GM12878 (cell line): ENCODE measurements at regions of chr3 and their contacts with region 1.

Region 1: DNA sequence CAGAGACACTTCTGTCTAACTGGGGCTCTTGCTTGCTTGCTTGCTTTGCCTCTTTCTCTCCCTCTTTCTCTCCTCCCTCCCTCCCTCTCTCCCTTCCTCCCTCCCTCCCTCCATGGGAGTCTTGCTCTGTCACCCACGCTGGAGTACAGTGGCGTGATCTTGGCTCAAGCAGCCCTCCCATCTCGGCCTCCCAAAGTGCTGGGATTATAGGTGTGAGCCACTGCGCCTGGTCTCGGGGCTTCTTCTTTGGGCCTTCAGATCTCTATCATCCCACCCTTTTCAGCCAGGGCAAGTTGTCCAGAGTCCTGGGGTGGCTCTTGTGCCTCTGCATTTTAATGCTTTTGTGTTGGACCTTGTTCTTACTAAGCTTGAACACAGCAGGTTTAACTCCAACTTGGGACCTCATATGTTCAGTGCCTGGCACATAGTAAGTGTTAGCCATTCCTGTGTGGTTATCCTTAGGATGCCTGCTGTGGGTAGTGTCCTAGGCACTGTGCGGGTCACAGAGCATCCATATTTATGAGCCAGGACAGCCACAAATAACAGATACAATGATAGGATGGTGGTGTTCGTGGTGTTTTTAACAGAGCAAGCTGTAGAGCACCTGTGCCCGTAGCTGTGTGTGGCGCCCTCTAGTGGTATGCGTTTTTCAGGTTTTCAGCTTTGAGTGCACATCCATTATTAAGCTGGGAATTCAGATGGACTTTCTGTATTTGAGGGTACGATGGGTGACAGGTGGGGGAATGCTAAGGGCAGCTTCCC is 75.1 kb downstream of the CCK start:
- DNase-seq: no peak
- ATAC-seq: peak; percentile 47
- H3K4me3 ChIP-seq: no peak overlapping the region
- H3K27ac ChIP-seq: peak overlapping the region; percentile 81; the same call in 1 of the 2 replicates
- H3K4me1 ChIP-seq: peaks cover 50% of the 10 kb centered on the region
- H3K27me3 ChIP-seq: no peaks in the 10 kb centered on the region
- CTCF ChIP-seq: peak; percentile 75 to 91 (median 79)
- EP300 ChIP-seq: no peak
- POLR2A ChIP-seq: peak; percentile 21; the same call in 1 of the 2 replicates
- RAD21 ChIP-seq: peak; percentile 79

Region 2: GRCh38 chr3:41961750-41962679 is 228.9 kb before region 1 on chr3 and contains the start of gene ULK4:
- CTCF ChIA-PET with region 1: no interaction called
- POLR2A ChIA-PET with region 1: no interaction called
- RAD21 ChIA-PET with region 1: interaction called, 3 read pairs
- SMC1A ChIA-PET with region 1: interaction called, 3 read pairs
- in situ Hi-C with region 1: no loop called
- intact Hi-C with region 1: loop called (anchors 10 kb)
- DNase-seq: peak; percentile 97
- ATAC-seq: peak; percentile 96
- H3K4me3 ChIP-seq: peak within 1 kb of the TSS; percentile 86
- H3K27ac ChIP-seq: peak within 1 kb of the TSS; percentile 61
- H3K4me1 ChIP-seq: no peaks in the 10 kb centered on the region
- H3K27me3 ChIP-seq: no peaks in the 10 kb centered on the region
- CTCF ChIP-seq: no peak
- EP300 ChIP-seq: no peak
- POLR2A ChIP-seq: peak; percentile 50; the same call in 1 of the 2 replicates
- RAD21 ChIP-seq: no peak
- polyA plus RNA-seq, gene ULK4: 4.5 to 6.4 TPM

Region 3: GRCh38 chr3:42101048-42101447 is 89.8 kb before region 1 on chr3:
- CTCF ChIA-PET with region 1: interaction called, 36 read pairs
- POLR2A ChIA-PET with region 1: no interaction called
- RAD21 ChIA-PET with region 1: interaction called, 6 read pairs
- SMC1A ChIA-PET with region 1: interaction called, 11 read pairs
- in situ Hi-C with region 1: no loop called
- intact Hi-C with region 1: no loop called
- DNase-seq: no peak
- ATAC-seq: no peak
- H3K4me3 ChIP-seq: no peak overlapping the region
- H3K27ac ChIP-seq: no peak overlapping the region
- H3K4me1 ChIP-seq: peaks cover 8% of the 10 kb centered on the region; the same call in 1 of the 2 replicates
- H3K27me3 ChIP-seq: no peaks in the 10 kb centered on the region
- CTCF ChIP-seq: no peak
- EP300 ChIP-seq: no peak
- POLR2A ChIP-seq: no peak
- RAD21 ChIP-seq: no peak

Region 4: DNA sequence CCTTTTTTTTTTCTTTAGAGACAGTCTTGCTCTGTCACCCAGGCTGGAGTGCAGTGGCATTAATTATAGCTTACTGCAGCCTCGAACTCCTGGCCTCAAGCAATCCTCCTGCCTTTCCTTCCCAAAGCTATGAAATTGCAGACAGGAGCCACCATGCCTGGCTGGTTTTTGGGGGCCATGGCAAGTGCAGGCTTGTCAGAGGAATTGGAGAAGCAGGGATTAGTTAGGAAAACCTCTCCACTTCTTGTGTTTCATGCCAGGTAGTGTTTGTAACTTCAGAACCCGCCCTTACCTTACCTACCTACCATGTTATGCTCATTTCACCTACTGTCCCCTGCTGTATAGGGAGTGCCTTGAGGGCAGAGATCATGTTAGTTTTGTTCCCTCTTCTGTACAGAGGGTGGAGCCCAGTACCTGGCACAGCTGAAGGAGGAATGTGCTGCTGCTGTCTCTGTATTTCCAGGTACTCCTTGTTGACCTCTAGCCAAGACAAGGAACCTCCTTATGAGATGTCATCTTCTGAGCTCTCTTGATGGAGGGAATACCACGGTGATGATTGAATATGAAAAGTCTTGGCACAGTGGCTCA is 55.9 kb before region 1 on chr3:
- CTCF ChIA-PET with region 1: interaction called, 45 read pairs
- POLR2A ChIA-PET with region 1: interaction called, 6 read pairs
- RAD21 ChIA-PET with region 1: no interaction called
- SMC1A ChIA-PET with region 1: interaction called, 26 read pairs
- in situ Hi-C with region 1: no loop called
- intact Hi-C with region 1: no loop called
- DNase-seq: no peak
- ATAC-seq: no peak
- H3K4me3 ChIP-seq: no peak overlapping the region
- H3K27ac ChIP-seq: no peak overlapping the region
- H3K4me1 ChIP-seq: no peaks in the 10 kb centered on the region
- H3K27me3 ChIP-seq: no peaks in the 10 kb centered on the region
- CTCF ChIP-seq: no peak
- EP300 ChIP-seq: no peak
- POLR2A ChIP-seq: no peak
- RAD21 ChIP-seq: no peak

Region 5: DNA sequence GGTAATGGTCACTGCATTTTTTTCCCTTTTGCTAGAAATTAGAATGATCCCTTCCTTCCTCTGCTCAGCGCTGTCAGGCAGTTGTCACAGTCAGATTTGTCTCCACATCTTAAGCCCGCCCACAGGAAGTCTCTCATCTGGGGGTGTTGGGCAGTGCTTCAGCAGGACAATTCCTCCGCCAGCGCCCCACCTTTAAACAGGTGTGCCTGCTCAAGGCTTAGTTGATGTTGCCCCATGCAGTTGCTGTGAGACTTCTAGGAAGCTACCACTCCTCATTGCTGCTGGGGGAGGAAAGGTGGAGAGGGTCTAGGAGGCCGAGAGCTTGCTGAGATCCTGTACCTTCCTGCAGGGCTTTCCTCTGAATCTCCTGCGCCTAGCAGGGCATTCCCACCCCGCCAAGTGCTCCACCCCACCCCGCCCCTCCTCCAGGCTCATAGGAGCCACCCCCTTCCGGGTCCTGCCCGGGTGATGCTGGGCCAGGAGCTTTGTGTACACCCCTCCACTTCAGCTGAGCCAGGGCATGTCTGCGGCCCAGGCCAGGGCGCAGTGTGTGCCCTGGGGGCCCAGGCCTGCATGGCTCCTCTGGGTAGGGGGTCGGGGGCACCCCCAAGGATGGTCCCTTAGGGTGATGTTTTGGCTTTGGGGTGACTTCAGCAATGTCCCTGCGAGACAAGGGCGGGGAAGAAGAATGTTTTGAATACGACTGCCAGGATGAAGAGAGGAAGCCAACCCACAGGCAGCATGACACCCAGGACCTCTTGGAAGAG is 31.0 kb before region 1 on chr3:
- CTCF ChIA-PET with region 1: interaction called, 11 read pairs
- POLR2A ChIA-PET with region 1: no interaction called
- RAD21 ChIA-PET with region 1: interaction called, 4 read pairs
- SMC1A ChIA-PET with region 1: interaction called, 3 read pairs
- in situ Hi-C with region 1: no loop called
- intact Hi-C with region 1: no loop called
- DNase-seq: no peak
- ATAC-seq: peak; percentile 82
- H3K4me3 ChIP-seq: no peak overlapping the region
- H3K27ac ChIP-seq: peak overlapping the region; percentile 34; the same call in 1 of the 2 replicates
- H3K4me1 ChIP-seq: peaks cover 28% of the 10 kb centered on the region
- H3K27me3 ChIP-seq: no peaks in the 10 kb centered on the region
- CTCF ChIP-seq: no peak
- EP300 ChIP-seq: no peak
- POLR2A ChIP-seq: no peak
- RAD21 ChIP-seq: no peak

Region 6: DNA sequence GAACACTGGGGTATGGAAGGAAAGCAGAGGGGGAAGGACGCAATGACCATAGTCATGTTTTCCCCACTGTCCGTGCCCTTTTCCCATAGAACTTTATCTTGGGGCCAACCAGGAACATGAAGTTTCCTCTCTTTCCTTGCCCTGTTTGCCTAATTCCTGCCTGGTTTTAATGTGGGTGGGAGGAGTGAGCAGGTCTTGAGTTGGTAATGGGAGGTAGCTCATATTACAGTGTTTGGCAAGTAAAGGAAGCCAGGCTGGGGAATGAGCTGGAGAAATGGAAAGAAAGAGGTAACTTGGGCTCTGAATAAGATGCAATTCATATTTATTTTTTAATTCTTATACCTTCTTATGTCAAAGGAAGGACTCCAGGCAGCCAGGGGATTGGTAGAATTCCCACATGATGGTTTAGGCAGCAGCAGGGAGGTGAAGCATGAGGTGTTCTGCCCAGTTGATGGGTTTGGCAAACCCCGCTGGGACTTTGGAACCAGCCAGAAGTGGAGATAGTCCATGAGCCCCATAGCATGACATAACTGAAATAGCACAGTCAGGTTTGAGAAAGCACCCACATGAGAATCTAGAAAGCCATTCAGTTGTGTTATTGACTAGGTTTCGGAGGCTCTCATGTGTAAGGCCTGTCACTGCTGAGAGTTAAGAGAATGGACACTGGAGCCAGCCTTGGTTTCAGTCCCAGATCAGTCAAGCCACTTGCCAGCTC is 15.1 kb after region 1 on chr3:
- CTCF ChIA-PET with region 1: interaction called, 29 read pairs
- POLR2A ChIA-PET with region 1: interaction called, 4 read pairs
- RAD21 ChIA-PET with region 1: interaction called, 8 read pairs
- SMC1A ChIA-PET with region 1: interaction called, 10 read pairs
- in situ Hi-C with region 1: no loop called
- intact Hi-C with region 1: no loop called
- DNase-seq: peak; percentile 85
- ATAC-seq: peak; percentile 97
- H3K4me3 ChIP-seq: no peak overlapping the region
- H3K27ac ChIP-seq: peak overlapping the region; percentile 57
- H3K4me1 ChIP-seq: peaks cover 27% of the 10 kb centered on the region
- H3K27me3 ChIP-seq: no peaks in the 10 kb centered on the region
- CTCF ChIP-seq: no peak
- EP300 ChIP-seq: no peak; a peak in 1 of 4 replicates
- POLR2A ChIP-seq: no peak
- RAD21 ChIP-seq: no peak